CD8-positive, alpha-beta memory T cell (primary cell): ENCODE measurements at regions of chr17 and their contacts with region 1.

Region 1: GRCh38 chr17:40026816-40027613 is 11.8 kb downstream of the CSF3 start:
- DNase-seq: peak; percentile 63 to 83 (median 72)
- H3K4me3 ChIP-seq: no peak overlapping the region
- H3K4me3 Mint-ChIP-seq: no peak overlapping the region
- H3K27ac ChIP-seq: no peak overlapping the region
- H3K27ac Mint-ChIP-seq: peak overlapping the region in 3 of 8 donors; percentile 15 to 86 (median 23)
- H3K4me1 ChIP-seq: peaks cover 19% of the 10 kb centered on the region
- H3K4me1 Mint-ChIP-seq: peaks cover 20 to 22% (median 21%) of the 10 kb centered on the region in 3 donors
- H3K27me3 ChIP-seq: no peaks in the 10 kb centered on the region
- H3K27me3 Mint-ChIP-seq: no peaks in the 10 kb centered on the region

Region 2: GRCh38 chr17:40015005-40015997 is 11.7 kb before region 1 on chr17 and contains the start of gene CSF3:
- CTCF ChIA-PET with region 1: interaction called, 63 read pairs
- POLR2A ChIA-PET with region 1: interaction called, 3 read pairs
- DNase-seq: no peak
- H3K4me3 ChIP-seq: no peak within 1 kb of the TSS
- H3K4me3 Mint-ChIP-seq: peak within 1 kb of the TSS in 1 of 7 donors; percentile 65
- H3K27ac ChIP-seq: no peak within 1 kb of the TSS
- H3K27ac Mint-ChIP-seq: no peak within 1 kb of the TSS
- H3K4me1 ChIP-seq: peaks cover 4% of the 10 kb centered on the region
- H3K4me1 Mint-ChIP-seq: peaks cover 5 to 15% (median 6%) of the 10 kb centered on the region in 3 donors
- H3K27me3 ChIP-seq: no peaks in the 10 kb centered on the region
- H3K27me3 Mint-ChIP-seq: peaks cover 2 to 5% of the 10 kb centered on the region in 2 donors
- total RNA-seq, gene CSF3: not detected